ENCODE measurements at regions of chr2 and their contacts with region 1.

Region 1: GRCh38 chr2:31413862-31414550 is 536 bp downstream of the XDH start:
- DNase-seq: no peak
- ATAC-seq: peak; percentile 36 to 38

Region 2: DNA sequence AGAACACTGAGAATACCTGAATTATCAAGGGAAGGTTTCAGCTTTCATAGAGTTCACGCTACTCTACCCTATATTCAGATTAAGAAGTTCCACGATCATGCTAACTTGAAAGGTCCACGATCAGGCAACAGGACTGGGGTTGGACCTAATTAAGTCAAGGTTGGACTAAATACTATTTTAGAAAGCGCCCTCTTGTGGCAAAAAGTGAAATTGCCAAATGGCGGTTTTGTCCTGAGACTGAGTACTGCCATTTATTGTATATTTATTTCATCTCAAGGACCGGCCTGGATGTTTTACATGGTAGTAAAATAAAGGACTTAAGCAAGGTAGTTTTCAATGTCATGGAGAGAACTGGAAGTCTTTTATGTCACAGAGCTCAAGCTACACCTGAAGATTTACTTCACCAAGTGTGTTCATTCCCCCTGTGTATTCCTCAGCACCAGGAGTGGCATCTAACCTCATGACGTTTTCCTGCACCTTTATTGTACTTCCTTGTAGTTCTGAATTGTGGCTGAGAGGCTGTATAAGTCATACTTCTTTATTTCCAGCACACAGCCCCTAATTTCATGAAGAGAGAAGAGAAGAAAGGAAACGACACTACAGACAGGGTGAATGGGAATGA is 110.0 kb after region 1 on chr2:
- intact Hi-C with region 1: loop called in 1 of 2 experiments (anchors 10 kb)
- DNase-seq: no peak
- ATAC-seq: no peak

Measured in left cardiac atrium (tissue), 4 donors.